AG04449 (cell line): ENCODE measurements at regions of chr5 and their contacts with region 1.

Region 1: DNA sequence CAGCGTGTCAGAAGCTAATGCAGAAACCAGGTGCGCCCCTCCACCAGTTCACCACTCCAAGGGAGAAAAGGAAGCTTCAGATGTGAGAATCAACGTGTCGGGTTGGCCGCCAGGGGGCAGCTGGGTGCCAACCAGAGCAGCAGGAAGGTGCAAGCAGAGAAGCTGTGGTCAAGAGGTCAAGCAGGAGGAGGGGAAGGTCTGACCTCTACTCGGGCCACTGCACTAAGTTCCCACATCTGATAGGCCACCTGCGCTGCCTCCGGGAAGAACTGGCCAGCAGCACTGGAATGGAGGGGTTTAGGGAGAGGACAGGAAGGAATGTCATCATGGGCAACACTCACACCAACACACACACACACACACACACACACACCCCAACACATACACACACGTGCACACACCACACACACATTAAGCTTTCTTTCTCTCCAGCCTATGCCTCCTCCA is 31.4 kb downstream of the ANXA6 start:
- DNase-seq: no peak
- H3K4me3 ChIP-seq: no peak overlapping the region
- CTCF ChIP-seq: peak; percentile 85

Region 2: GRCh38 chr5:150931368-150931965 is 194.8 kb before region 1 on chr5:
- CTCF ChIA-PET with region 1: no interaction called
- POLR2A ChIA-PET with region 1: no interaction called
- DNase-seq: no peak
- H3K4me3 ChIP-seq: no peak overlapping the region
- CTCF ChIP-seq: no peak

Region 3: GRCh38 chr5:151020304-151021110 is 105.7 kb before region 1 on chr5 and contains the start of gene GPX3:
- CTCF ChIA-PET with region 1: interaction called, 11 read pairs
- POLR2A ChIA-PET with region 1: no interaction called
- DNase-seq: no peak
- H3K4me3 ChIP-seq: peak within 1 kb of the TSS; percentile 63
- CTCF ChIP-seq: no peak

Region 4: GRCh38 chr5:151141535-151141934 is 15.3 kb after region 1 on chr5:
- CTCF ChIA-PET with region 1: interaction called, 208 read pairs
- POLR2A ChIA-PET with region 1: interaction called, 3 read pairs
- DNase-seq: no peak
- H3K4me3 ChIP-seq: no peak overlapping the region
- CTCF ChIP-seq: no peak

Region 5: DNA sequence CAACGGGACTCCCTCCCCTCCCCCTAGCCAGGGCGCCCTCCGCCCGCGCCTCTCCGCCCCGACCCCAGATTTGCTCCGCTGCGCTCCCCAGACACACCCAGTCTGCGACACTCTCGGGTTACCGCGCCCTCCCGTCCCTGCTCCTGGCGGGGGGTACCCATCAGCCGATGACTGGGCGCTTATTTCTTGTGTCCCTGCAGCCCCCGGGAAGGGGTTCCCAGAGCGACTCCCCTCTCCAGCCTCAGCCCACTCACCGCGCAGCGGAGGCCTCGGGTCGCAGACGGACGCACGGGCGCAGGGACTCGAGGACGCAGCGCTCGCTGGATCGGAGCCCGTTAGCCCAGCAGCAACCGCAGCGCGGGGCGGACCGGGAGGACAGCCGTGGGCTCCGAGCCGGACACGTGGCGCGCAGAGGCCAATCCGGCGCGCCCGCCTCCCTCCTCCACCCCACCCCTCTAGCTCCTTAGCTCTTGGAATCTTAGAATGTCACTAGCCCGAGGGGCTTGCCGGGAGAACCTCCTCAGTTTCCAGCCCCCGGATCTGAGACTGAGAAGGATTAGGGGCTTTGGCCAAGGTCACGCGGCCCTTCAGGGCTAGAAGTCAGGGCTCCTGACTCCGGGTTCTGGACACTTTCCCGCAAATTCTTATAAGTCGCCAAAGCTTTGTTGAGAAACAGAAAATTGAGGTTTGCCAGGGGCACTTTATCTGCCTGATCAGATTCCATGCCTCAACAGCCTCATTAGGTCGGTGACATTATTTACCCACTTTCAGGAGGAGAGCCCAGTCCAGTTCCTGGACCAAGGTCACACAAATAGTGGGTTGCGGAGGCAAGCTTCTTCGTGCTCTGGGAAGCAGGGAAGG is 31.4 kb after region 1 on chr5 and contains the start of gene ANXA6:
- CTCF ChIA-PET with region 1: interaction called, 232 read pairs
- POLR2A ChIA-PET with region 1: interaction called, 4 read pairs
- DNase-seq: no peak
- H3K4me3 ChIP-seq: peak within 1 kb of the TSS; percentile 91
- CTCF ChIP-seq: no peak

Region 6: GRCh38 chr5:151239237-151239861 is 113.1 kb after region 1 on chr5:
- CTCF ChIA-PET with region 1: interaction called, 17 read pairs
- POLR2A ChIA-PET with region 1: no interaction called
- DNase-seq: no peak
- H3K4me3 ChIP-seq: no peak overlapping the region
- CTCF ChIP-seq: peak; percentile 77